ENCODE measurements at regions of chr10 and their contacts with region 1.

Region 1: GRCh38 chr10:69045441-69046300 is 42.2 kb upstream of the SRGN start:
- DNase-seq: peak; percentile 42
- H3K4me3 Mint-ChIP-seq: peak overlapping the region; percentile 76
- H3K27ac Mint-ChIP-seq: peak overlapping the region; percentile 99
- H3K4me1 Mint-ChIP-seq: peaks cover 54% of the 10 kb centered on the region
- H3K27me3 Mint-ChIP-seq: no peaks in the 10 kb centered on the region

Region 2: DNA sequence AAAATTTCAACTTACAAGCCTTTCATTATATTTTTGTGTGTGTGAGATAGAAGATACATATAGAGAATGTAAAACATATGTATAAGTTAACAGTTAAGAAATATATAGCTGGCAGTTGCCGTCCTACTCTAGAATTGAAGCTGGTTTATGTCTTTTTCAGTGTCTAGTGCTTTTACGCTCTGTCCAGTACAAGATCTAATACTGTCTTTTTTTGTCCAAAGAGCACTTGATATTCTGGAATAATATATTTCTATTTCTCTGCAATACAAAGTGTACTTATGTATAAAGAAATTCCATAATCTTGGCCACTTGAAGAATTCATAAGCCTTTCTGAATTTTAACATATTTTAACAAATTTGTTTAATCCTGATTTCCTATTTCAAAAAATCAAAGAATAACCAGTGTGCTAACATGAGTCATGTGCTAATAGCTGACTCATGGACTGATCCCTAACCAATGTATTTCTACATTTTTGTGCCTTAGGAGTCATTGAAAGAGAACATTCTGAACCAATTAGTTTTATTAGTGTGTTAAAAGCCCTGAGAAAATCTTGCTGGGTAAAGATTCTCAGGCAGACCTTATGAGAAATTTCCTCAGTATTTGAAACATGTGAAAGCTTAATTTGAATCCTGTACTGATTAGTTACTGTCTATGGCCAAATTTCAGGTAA is 397.9 kb before region 1 on chr10:
- intact Hi-C with region 1: no loop called
- DNase-seq: no peak
- H3K4me3 Mint-ChIP-seq: no peak overlapping the region
- H3K27ac Mint-ChIP-seq: no peak overlapping the region
- H3K4me1 Mint-ChIP-seq: no peaks in the 10 kb centered on the region
- H3K27me3 Mint-ChIP-seq: no peaks in the 10 kb centered on the region

Region 3: DNA sequence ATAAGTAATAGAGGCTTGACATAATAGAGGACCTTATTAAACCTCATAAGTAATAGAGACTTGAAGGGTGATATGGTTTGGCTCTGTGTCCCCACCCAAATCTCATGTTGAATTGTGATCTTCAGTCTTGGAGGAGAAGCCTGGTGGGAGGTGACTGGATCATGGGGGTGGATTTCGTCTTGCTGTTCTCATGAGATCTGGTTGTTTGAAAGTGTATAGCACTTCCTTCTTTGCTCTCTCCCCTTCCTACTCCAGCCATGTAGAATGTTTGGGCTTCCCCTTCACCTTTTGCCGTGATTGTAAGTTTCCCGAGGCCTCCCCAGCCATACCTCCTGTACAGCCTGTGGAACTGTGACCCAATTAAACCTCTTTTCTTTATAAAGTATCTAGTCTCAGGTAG is 48.5 kb before region 1 on chr10:
- intact Hi-C with region 1: loop called (anchors 1 kb)
- DNase-seq: no peak
- H3K4me3 Mint-ChIP-seq: peak overlapping the region; percentile 16
- H3K27ac Mint-ChIP-seq: peak overlapping the region; percentile 86
- H3K4me1 Mint-ChIP-seq: peaks cover 35% of the 10 kb centered on the region
- H3K27me3 Mint-ChIP-seq: no peaks in the 10 kb centered on the region

Region 4: GRCh38 chr10:69004821-69005220 is 40.9 kb before region 1 on chr10:
- intact Hi-C with region 1: loop called (anchors 1 kb)
- DNase-seq: no peak
- H3K4me3 Mint-ChIP-seq: no peak overlapping the region
- H3K27ac Mint-ChIP-seq: no peak overlapping the region
- H3K4me1 Mint-ChIP-seq: peaks cover 18% of the 10 kb centered on the region
- H3K27me3 Mint-ChIP-seq: no peaks in the 10 kb centered on the region

Region 5: DNA sequence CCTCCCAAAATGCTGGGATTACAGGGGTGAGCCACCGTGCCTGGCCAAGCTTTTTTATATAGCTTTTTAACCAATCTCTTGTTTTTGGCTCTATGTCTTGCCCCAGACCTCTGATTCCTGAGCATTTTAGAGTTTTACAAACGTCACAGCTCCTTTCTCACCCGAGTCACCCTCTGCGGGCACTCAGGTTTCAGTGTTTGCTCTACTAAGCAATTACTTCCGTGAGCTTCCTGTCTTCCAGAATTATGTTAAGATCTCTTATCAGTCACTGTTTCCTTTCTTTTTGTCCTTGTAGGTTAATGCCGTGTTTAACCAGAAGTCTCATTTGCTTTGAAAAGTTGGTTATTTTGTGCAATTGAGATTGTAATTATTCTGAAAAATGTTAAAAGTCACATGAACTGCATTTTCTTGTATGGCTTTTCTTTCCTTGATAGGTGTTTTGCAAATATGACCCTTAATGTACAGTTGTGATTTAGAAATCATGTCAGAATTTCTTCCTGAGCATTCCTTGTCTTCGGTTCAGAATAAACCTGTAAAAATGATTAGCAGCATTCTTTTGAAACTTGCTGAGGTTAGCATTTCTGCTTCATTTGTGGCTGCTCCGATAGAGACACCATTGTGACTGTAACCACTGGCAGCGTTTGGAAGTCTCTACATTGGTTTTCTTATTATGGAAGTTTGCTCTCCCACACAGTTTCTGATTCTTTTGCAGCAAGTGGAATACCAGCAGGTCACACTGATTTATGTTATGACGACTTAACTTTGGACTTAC is 169.9 kb after region 1 on chr10:
- intact Hi-C with region 1: loop called (anchors 2 kb)
- DNase-seq: no peak
- H3K4me3 Mint-ChIP-seq: peak overlapping the region; percentile 27
- H3K27ac Mint-ChIP-seq: peak overlapping the region; percentile 87
- H3K4me1 Mint-ChIP-seq: peaks cover 36% of the 10 kb centered on the region
- H3K27me3 Mint-ChIP-seq: no peaks in the 10 kb centered on the region

Region 6: DNA sequence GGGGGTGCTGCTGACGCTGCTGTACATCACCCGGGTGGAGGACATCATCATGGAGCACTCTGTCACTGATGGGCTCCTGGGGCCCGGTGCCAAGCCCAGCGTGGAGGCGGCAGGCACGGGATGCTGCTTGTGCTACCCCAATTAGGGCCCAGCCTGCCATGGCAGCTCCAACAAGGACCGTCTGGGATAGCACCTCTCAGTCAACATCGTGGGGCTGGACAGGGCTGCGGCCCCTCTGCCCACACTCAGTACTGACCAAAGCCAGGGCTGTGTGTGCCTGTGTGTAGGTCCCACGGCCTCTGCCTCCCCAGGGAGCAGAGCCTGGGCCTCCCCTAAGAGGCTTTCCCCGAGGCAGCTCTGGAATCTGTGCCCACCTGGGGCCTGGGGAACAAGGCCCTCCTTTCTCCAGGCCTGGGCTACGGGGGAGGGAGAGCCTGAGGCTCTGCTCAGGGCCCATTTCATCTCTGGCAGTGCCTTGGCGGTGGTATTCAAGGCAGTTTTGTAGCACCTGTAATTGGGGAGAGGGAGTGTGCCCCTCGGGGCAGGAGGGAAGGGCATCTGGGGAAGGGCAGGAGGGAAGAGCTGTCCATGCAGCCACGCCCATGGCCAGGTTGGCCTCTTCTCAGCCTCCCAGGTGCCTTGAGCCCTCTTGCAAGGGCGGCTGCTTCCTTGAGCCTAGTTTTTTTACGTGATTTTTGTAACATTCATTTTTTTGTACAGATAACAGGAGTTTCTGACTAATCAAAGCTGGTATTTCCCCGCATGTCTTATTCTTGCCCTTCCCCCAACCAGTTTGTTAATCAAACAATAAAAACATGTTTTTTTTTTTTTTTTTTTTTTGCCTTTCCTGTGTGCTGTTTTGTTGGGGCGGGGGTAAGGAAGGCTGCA is 461.4 kb after region 1 on chr10:
- intact Hi-C with region 1: no loop called
- DNase-seq: no peak
- H3K4me3 Mint-ChIP-seq: peak overlapping the region; percentile 42
- H3K27ac Mint-ChIP-seq: peak overlapping the region; percentile 50
- H3K4me1 Mint-ChIP-seq: peaks cover 9% of the 10 kb centered on the region
- H3K27me3 Mint-ChIP-seq: peaks cover 21% of the 10 kb centered on the region

Measured in activated T-helper 1 cell treated with anti-CD3 and anti-CD28 coated beads, Interleukin-12 subunit alpha, Interleukin-12 subunit beta, Interleukin-2, Interleukin-4 antibody, amounts not matched to agents 30 ng/mL and 10 ng/mL and 1 ng/mL, durations not matched to agents 14 hours and 24 hours and 36 hours (primary cell).